HepG2 (cell line): ENCODE measurements at regions of chr18 and their contacts with region 1.

Region 1: DNA sequence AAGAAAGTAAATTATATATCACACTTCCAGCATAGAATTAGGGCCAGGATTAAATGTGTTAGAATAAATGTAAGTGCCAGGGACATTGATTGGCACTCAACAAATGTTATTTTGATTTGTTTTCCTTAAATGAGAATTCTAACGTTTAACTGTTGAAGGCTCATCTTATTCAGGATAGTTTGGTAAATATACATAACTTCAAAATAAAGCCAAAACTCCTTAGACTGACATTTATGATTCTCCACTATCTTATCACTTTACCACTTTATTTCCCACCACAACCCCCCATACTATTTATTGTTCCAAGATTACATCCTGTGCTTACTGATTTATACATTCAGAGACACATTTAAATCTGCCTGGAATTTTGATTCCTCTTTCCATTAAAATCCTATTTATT is 769.5 kb upstream of the CDH2 start:
- DNase-seq: no peak
- ATAC-seq: no peak
- H3K4me3 ChIP-seq: no peak overlapping the region
- H3K27ac ChIP-seq: no peak overlapping the region
- H3K4me1 ChIP-seq: no peaks in the 10 kb centered on the region
- H3K27me3 ChIP-seq: no peaks in the 10 kb centered on the region
- CTCF ChIP-seq: no peak
- EP300 ChIP-seq: no peak
- POLR2A ChIP-seq: no peak
- RAD21 ChIP-seq: no peak

Region 2: GRCh38 chr18:28743115-28743514 is 203.4 kb before region 1 on chr18:
- CTCF ChIA-PET with region 1: no interaction called
- POLR2A ChIA-PET with region 1: no interaction called
- in situ Hi-C with region 1: no loop called
- intact Hi-C with region 1: no loop called
- DNase-seq: no peak
- ATAC-seq: no peak
- H3K4me3 ChIP-seq: no peak overlapping the region
- H3K27ac ChIP-seq: no peak overlapping the region
- H3K4me1 ChIP-seq: no peaks in the 10 kb centered on the region
- H3K27me3 ChIP-seq: no peaks in the 10 kb centered on the region
- CTCF ChIP-seq: no peak
- EP300 ChIP-seq: no peak
- POLR2A ChIP-seq: no peak
- RAD21 ChIP-seq: no peak

Region 3: DNA sequence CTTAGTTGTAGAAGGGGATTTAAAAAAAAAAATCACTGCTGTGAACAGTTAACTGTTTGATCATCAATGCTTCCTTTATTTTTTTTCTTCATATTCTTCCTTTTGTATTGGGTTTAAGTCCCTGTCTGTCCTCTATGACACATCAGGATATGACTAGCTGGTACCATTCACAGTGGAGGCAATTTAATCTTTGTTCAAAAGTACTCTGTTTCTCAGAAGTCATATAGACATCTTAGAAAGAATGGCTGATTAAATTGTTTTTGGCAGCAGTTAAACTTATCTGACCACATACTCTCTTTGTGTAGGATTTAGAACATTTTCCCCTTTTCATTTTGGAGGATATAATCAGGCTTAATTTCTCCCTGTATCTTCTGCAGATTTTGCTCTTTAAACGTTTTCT is 38.3 kb after region 1 on chr18:
- CTCF ChIA-PET with region 1: no interaction called
- POLR2A ChIA-PET with region 1: no interaction called
- in situ Hi-C with region 1: no loop called
- intact Hi-C with region 1: loop called (anchors 1 kb)
- DNase-seq: no peak
- ATAC-seq: no peak
- H3K4me3 ChIP-seq: no peak overlapping the region
- H3K27ac ChIP-seq: no peak overlapping the region
- H3K4me1 ChIP-seq: no peaks in the 10 kb centered on the region
- H3K27me3 ChIP-seq: no peaks in the 10 kb centered on the region
- CTCF ChIP-seq: no peak
- EP300 ChIP-seq: no peak
- POLR2A ChIP-seq: no peak
- RAD21 ChIP-seq: no peak